Ascending aorta (tissue), 2 donors: ENCODE measurements at regions of chr3 and their contacts with region 1.

Region 1: DNA sequence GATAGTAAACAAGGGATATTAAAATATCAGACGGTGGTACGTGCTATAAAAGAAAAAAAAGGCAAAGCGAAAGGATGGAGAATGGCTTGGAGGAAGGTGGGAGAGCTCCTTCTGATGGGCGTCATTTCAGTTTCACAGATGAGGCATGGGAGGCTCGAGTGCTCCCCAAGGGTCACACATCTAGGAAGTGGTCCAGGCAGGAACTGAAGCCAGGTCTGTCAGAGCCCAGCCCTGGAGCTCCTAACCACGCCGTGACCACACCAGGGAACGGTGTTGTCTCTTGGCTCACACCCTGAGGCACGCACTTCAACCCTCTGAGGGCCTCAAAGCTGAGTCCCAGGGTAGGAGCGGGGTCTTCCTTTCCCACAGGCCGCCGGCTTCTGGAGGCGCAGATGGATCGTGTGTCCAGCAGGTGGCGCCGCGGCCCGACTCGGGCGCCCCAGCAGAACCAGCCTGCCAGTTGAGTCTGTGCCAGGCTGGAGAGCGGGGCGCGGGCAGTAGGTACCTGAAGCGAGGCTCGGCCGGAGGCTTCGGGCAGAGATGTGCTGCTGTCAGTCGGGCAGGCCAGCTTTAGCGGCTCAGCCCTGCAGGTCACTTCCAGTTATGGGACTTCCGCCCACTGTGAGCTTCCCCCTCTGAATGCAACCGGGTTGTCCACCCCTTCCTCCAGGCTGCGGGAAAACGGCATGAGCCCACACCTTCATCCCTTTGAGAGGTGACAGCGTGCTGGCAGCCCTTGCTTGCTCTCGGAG is 68.1 kb downstream of the SLC6A1 start:
- DNase-seq: peak in 1 of 2 donors; percentile 79
- H3K4me3 ChIP-seq: peak overlapping the region; percentile 4 to 51
- H3K27ac ChIP-seq: no peak overlapping the region
- H3K4me1 ChIP-seq: peaks cover 0 to 8% of the 10 kb centered on the region in 2 donors
- H3K27me3 ChIP-seq: no peaks in the 10 kb centered on the region
- CTCF ChIP-seq: peak; percentile 94 to 98 (median 95)

Region 2: DNA sequence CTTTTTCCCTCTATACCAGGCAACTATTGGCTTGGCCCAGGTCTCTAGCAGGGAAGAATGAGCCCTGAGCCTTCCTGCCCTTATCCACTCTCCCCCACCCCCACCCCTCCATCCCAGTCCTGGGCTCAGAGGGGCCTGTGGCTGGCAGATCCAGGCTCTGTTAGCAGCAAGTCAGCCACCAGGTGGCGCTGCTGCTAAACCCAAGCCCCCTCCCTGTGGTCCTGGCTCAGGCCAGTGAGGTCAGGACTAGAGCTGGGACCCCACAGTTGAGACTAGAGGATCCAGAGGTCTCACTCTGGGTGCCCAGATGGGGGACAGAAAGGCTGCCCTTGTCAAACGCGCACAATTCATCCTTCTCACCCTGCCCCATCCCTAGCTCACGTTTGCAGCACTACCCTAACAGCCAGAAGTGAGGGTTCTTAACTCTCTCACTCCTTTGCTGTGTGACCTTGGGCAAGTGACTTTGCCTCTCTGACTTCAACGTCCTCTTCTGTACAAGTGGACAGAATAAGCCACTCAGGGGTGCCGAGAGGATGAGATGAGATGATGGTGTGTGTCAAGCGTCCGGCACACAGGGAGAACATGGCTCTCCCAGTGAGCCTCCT is 114.9 kb before region 1 on chr3:
- intact Hi-C with region 1: loop called (anchors 1 kb)
- DNase-seq: no peak
- H3K4me3 ChIP-seq: no peak overlapping the region
- H3K27ac ChIP-seq: no peak overlapping the region
- H3K4me1 ChIP-seq: no peaks in the 10 kb centered on the region
- H3K27me3 ChIP-seq: no peaks in the 10 kb centered on the region
- CTCF ChIP-seq: peak; percentile 68 to 91 (median 72)

Region 3: GRCh38 chr3:11136871-11137626 is 76.4 kb after region 1 on chr3:
- intact Hi-C with region 1: loop called (anchors 2 kb)
- DNase-seq: peak; percentile 75 to 96
- H3K4me3 ChIP-seq: peak overlapping the region in 1 of 2 donors; percentile 54
- H3K27ac ChIP-seq: peak overlapping the region; percentile 81 to 93
- H3K4me1 ChIP-seq: peaks cover 4 to 15% of the 10 kb centered on the region in 2 donors
- H3K27me3 ChIP-seq: no peaks in the 10 kb centered on the region
- CTCF ChIP-seq: no peak

Region 4: DNA sequence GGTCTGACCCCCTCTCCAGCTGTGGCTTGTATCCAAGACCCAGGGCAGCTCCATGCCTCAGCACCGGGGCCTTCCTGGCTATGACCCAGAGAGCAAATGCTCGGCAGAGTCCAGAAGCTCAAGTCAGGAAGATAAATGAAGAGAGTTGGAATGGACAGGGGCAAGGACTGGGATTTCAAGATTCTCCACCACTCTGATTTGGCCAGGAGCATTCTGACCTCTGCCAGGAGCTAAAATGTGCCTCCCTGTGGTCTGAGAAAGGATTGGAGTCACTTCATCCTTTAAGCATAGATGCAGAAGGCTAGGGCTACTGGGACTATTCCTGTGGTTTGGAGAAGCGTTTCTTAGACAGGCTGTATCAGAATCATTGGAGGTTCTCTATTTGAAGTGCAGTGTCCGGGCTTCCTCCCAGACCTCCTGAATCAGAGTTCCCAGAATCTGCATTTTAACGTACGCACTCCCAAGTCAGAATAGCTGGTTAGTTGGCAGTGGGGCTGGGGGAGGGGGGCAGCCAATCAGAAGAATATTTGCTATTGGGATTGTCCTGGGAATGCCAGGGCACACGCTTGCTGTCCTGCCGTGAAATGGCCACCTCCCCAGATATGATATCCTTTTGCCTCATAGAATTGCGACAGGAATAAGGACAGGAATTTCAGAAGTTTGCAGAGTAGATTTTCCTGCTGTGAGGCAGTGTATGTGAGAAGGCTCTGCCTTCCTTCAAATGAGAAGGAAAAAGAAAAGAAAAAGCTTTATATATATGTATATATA is 151.0 kb after region 1 on chr3:
- intact Hi-C with region 1: loop called (anchors 5 kb)
- DNase-seq: peak in 1 of 2 donors; percentile 71
- H3K4me3 ChIP-seq: peak overlapping the region in 1 of 2 donors; percentile 26
- H3K27ac ChIP-seq: peak overlapping the region; percentile 85 to 86
- H3K4me1 ChIP-seq: peaks cover 9 to 46% of the 10 kb centered on the region in 2 donors
- H3K27me3 ChIP-seq: no peaks in the 10 kb centered on the region
- CTCF ChIP-seq: peak in 1 of 3 experiments; percentile 38

Region 5: DNA sequence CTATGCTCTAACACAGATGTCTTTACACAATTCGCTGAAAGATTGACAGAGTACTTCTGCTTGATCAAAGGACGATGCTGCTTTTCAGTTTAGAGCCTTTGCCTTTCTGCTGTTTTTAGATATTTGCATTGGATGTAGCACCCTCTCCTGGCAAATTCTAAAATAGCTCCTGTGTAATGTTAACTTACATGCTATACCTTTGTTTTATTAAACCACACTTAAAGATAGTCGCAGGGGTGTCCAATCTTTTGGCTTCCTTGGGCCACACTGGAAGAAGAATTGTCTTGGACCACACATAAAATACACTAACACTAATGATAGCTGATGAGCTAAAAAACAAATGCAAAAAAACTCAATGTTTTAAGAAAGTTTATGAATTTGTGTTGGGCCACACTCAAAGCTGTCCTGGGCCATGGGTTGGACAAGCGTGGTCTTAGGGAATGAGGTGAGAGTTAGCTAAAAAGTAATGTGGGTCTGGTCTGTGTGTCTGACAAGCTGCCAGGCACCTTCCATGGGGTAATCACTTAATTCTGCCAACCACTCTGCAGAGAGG is 274.5 kb after region 1 on chr3:
- intact Hi-C with region 1: loop called (anchors 1 kb)
- DNase-seq: no peak
- H3K4me3 ChIP-seq: no peak overlapping the region
- H3K27ac ChIP-seq: no peak overlapping the region
- H3K4me1 ChIP-seq: no peaks in the 10 kb centered on the region
- H3K27me3 ChIP-seq: no peaks in the 10 kb centered on the region
- CTCF ChIP-seq: peak; percentile 64 to 70 (median 67)